ENCODE measurements at regions of chr6 and their contacts with region 1.

Region 1: GRCh38 chr6:105087571-105088211 is 92.1 kb downstream of the POPDC3 start:
- DNase-seq: peak; percentile 54
- H3K4me3 ChIP-seq: no peak overlapping the region
- H3K27ac ChIP-seq: no peak overlapping the region
- H3K4me1 ChIP-seq: no peaks in the 10 kb centered on the region
- H3K27me3 ChIP-seq: peaks cover 0 to 2% of the 10 kb centered on the region in 2 experiments
- CTCF ChIP-seq: peak; percentile 52 to 59
- POLR2A ChIP-seq: no peak

Region 2: DNA sequence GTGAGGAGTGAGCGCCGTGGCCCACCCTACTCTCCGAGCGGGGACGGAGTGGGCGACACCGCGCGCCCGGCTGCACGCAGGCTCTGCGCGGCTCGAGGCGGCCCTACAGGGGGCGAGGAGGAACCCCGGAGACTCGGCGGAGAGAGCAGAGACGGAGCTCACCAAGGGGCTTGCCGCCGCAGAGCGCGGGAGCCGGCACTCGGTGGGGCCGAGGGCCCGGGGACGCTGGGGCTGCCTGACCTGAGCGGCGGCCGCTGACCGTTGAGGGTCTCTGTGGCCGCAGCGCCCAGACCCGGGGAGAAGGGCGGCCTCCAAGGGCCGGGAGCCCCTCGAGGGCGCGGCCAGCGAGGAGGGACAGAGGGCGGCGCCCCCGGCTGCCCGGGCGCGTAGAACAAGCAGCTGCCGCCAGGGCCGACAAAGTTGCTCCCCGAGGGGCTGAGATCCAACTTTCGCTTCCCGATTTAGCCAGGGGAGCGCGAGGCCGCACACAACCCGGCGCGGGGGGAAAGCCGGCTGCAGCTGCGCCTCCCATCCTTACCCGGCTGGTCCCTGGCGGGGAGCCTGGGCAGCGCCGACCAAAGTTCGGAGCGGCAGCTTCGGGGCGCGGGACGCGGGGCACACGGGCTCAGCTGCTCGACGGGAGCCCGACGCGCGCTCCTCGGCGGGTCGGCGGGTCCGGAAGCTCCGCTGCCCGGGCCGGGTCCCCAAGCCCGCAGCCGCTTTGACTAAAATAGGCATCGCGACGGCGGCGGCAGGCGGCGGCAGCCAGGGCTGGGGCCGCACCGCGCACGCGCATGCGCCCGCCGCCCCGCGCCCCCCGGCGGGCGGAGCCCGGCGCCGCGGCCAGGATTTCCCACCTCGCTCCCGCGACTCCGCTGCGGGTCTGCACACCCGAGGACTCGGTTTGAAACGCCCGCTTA is 49.0 kb after region 1 on chr6:
- CTCF ChIA-PET with region 1: interaction called, 13 read pairs
- POLR2A ChIA-PET with region 1: no interaction called
- dilution Hi-C with region 1: no loop called
- intact Hi-C with region 1: no loop called
- DNase-seq: peak; percentile 55
- H3K4me3 ChIP-seq: peak overlapping the region; percentile 53 to 96 (median 76)
- H3K27ac ChIP-seq: peak overlapping the region; percentile 38
- H3K4me1 ChIP-seq: peaks cover 11% of the 10 kb centered on the region
- H3K27me3 ChIP-seq: no peaks in the 10 kb centered on the region
- CTCF ChIP-seq: peak in 1 of 2 donors; percentile 38
- POLR2A ChIP-seq: no peak

Region 3: GRCh38 chr6:105346052-105346451 is 258.4 kb after region 1 on chr6:
- CTCF ChIA-PET with region 1: interaction called, 10 read pairs
- POLR2A ChIA-PET with region 1: no interaction called
- dilution Hi-C with region 1: no loop called
- intact Hi-C with region 1: no loop called
- DNase-seq: no peak
- H3K4me3 ChIP-seq: no peak overlapping the region
- H3K27ac ChIP-seq: no peak overlapping the region
- H3K4me1 ChIP-seq: no peaks in the 10 kb centered on the region
- H3K27me3 ChIP-seq: no peaks in the 10 kb centered on the region
- CTCF ChIP-seq: no peak
- POLR2A ChIP-seq: no peak

Region 4: GRCh38 chr6:105363100-105363754 is 275.5 kb after region 1 on chr6:
- CTCF ChIA-PET with region 1: interaction called, 160 read pairs
- POLR2A ChIA-PET with region 1: no interaction called
- dilution Hi-C with region 1: no loop called
- intact Hi-C with region 1: loop called (anchors 1 kb)
- DNase-seq: peak; percentile 30
- H3K4me3 ChIP-seq: no peak overlapping the region
- H3K27ac ChIP-seq: no peak overlapping the region
- H3K4me1 ChIP-seq: peaks cover 20% of the 10 kb centered on the region
- H3K27me3 ChIP-seq: no peaks in the 10 kb centered on the region
- CTCF ChIP-seq: peak; percentile 23 to 29
- POLR2A ChIP-seq: no peak

Region 5: GRCh38 chr6:105424175-105424783 is 336.6 kb after region 1 on chr6:
- CTCF ChIA-PET with region 1: interaction called, 54 read pairs
- POLR2A ChIA-PET with region 1: no interaction called
- dilution Hi-C with region 1: loop called (anchors 25 kb)
- intact Hi-C with region 1: loop called (anchors 1 kb)
- DNase-seq: peak; percentile 79
- H3K4me3 ChIP-seq: no peak overlapping the region
- H3K27ac ChIP-seq: no peak overlapping the region
- H3K4me1 ChIP-seq: peaks cover 13% of the 10 kb centered on the region
- H3K27me3 ChIP-seq: peaks cover 1 to 3% of the 10 kb centered on the region in 2 experiments
- CTCF ChIP-seq: peak; percentile 57 to 69
- POLR2A ChIP-seq: no peak

Region 6: DNA sequence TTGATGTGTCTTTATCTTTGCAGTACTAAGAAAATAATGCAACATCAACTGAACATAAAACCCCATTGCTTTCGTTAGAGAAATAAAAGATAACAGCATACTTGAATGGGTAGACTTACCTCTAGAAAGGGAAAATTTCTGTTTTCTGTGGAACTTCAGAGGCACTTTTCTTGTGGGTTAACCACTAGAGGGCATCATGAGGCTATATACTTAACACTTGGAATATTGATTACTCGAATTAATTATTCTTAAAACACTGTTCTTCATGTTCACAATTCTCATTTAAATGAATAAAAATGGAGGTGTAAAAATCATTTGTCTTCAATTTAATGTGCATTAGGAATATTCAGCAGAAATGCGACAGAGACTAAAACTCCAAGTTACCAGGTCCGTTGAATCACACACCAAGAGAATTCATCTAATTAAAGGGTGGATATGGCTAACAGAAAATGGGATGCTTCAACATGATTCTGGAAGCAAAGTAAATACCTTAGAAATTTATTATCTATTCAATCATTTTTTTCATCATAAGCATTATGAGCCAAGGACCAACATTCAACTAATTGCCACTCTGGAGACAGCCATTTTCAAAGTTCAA is 646.0 kb after region 1 on chr6:
- CTCF ChIA-PET with region 1: no interaction called
- POLR2A ChIA-PET with region 1: no interaction called
- dilution Hi-C with region 1: no loop called
- intact Hi-C with region 1: no loop called
- DNase-seq: peak; percentile 13
- H3K4me3 ChIP-seq: no peak overlapping the region
- H3K27ac ChIP-seq: no peak overlapping the region
- H3K4me1 ChIP-seq: no peaks in the 10 kb centered on the region
- H3K27me3 ChIP-seq: peaks cover 0 to 3% of the 10 kb centered on the region in 2 experiments
- CTCF ChIP-seq: peak; percentile 36 to 44
- POLR2A ChIP-seq: no peak

Measured in endothelial cell of umbilical vein (primary cell).